WTC11 (cell line): ENCODE measurements at regions of chr9 and their contacts with region 1.

Region 1: DNA sequence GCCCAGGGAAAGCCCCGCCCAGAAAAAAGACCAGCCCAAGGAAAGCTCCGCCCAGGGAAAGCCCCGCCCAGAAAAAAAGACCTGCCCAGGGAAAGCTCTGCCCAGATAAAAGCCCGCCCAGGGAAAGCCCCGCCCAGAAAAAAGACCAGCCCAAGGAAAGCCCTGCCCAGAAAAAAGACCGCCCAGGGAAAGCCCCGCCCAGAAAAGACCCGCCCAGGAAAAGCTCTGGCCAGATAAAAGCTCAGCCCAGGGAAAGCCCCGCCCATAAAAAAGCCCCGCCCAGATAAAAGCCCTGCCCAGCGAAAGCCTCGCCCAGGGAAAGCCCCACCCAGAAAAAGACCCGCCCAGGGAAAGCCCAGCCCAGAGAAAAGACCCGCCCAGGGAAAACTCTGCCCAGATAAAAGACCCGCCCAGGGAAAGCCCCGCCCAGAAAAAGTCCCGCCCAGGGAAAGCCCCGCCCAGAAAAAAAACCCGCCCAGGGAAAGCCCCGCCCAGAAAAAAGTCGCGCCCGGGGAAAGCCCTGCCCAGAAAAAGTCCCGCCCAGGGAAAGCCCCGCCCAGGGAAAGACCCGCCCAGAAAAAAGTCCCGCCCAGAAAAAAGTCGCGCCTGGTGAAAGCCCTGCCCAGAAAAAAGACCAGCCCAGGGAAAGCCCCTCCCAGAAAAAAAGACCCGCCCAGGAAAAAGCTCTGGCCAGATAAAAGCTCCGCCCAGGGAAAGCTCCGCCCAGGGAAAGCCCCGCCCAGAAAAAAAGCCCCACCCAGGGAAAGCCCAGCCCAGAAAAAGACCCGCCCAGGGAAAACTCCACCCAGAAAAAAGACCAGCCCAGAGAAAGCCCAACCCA is 11.9 kb downstream of the GRIN1 start:
- DNase-seq: peak; percentile 80
- ATAC-seq: peak; percentile 54
- H3K4me3 Mint-ChIP-seq: no peak overlapping the region
- H3K27ac Mint-ChIP-seq: no peak overlapping the region
- H3K4me1 Mint-ChIP-seq: no peaks in the 10 kb centered on the region; the same call in 1 of the 2 replicates
- H3K27me3 Mint-ChIP-seq: peaks cover 17% of the 10 kb centered on the region
- CTCF ChIP-seq: no peak

Region 2: DNA sequence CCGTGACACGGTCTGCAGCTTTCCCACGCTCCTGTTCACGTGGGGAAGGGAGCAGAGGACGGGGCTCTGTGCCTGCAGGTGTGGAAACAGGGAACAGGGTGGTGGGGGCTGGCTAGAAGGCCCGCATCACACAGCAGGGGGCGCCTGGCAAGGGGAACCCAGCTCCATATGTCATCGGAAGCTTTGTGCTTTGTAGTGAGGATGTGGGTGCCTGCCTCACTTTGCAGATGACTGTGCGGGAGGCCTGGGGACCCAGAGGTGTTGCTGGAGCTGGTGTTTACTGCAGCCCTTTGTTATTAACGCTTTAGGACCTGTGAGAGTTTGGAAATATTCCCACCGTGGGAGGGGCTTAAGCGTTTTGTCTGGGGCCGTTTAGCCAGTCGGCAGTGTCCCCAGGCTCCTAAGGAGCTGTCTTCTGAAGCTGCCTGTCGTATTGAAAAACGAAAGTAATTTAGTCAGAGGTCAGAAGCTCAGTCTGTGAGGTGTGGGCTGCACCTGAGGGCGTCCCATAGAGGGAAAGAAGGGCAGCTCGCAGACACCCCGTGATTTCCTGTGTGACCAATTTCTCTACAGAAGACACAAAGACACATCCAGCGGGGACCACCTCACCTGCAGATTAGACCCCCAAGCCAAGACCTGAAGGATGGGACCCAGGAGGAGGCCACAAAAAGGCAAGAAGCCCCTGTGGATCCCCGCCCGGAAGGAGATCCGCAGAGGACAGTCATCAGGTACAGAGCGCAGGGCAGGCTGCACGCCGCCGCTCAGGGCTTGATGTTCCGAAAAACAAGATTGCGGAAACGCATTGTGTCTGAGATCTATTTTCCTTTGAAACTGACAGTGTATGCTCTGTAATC is 54.9 kb before region 1 on chr9:
- CTCF ChIA-PET with region 1: no interaction called
- POLR2A ChIA-PET with region 1: no interaction called
- DNase-seq: no peak
- ATAC-seq: no peak
- H3K4me3 Mint-ChIP-seq: no peak overlapping the region
- H3K27ac Mint-ChIP-seq: no peak overlapping the region
- H3K4me1 Mint-ChIP-seq: no peaks in the 10 kb centered on the region
- H3K27me3 Mint-ChIP-seq: no peaks in the 10 kb centered on the region
- CTCF ChIP-seq: no peak

Region 3: GRCh38 chr9:137138722-137139467 is 11.9 kb before region 1 on chr9 and contains the start of gene GRIN1:
- CTCF ChIA-PET with region 1: interaction called, 17 read pairs
- POLR2A ChIA-PET with region 1: interaction called, 4 read pairs
- DNase-seq: peak; percentile 55
- ATAC-seq: peak; percentile 25
- H3K4me3 Mint-ChIP-seq: peak within 1 kb of the TSS; percentile 55
- H3K27ac Mint-ChIP-seq: no peak within 1 kb of the TSS
- H3K4me1 Mint-ChIP-seq: peaks cover 6% of the 10 kb centered on the region; the same call in 1 of the 2 replicates
- H3K27me3 Mint-ChIP-seq: peaks cover 75% of the 10 kb centered on the region
- CTCF ChIP-seq: no peak
- total RNA-seq, gene GRIN1: 4.0 to 6.6 TPM (median 4.1 TPM) in 3 replicates